Activated naive CD8-positive, alpha-beta T cell treated with anti-CD3 and anti-CD28 coated beads, Interleukin-2, amount 10 ng/mL, durations not matched to agents 7 days and 5 days (primary cell): ENCODE measurements at regions of chr3 and their contacts with region 1.

Region 1: DNA sequence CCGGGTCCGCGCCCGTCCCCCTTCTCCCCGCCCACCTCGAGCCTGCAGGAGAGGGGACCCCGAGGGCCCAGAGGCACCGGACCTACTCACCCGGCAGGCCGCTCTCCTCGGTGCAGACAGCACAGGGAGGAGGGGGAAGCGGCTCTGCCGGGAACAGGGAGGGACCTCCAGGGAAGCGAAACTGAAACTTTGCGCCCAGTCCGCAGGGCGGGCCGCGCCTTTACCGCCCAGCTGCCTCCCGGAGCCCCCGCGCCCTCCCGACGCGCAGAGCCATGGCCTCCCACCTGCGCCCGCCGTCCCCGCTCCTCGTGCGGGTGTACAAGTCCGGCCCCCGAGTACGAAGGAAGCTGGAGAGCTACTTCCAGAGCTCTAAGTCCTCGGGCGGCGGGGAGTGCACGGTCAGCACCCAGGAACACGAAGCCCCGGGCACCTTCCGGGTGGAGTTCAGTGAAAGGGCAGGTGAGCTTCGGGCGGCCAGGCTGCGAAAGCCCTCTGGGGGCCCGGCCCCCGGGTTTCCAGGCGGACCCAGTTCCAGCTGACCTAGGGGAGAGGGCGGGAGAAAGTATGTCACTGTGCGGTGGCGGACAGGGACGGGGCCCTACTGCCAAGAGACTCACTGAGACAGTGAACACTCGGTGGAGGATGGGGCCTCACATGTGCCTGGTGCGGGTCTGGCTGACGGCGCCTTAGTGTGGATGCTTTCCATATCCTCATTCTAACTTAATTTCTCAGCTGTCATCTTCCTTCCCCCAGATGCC is at the starts of genes DTX3L and PARP9:
- DNase-seq: peak; percentile 93
- ATAC-seq: peak; percentile 95
- H3K4me3 Mint-ChIP-seq: peak within 1 kb of the TSS; percentile 97
- H3K27ac Mint-ChIP-seq: peak within 1 kb of the TSS; percentile 100
- H3K4me1 Mint-ChIP-seq: peaks cover 51% of the 10 kb centered on the region
- H3K27me3 Mint-ChIP-seq: no peaks in the 10 kb centered on the region
- total RNA-seq, gene DTX3L: 116 to 117 TPM
- total RNA-seq, gene PARP9: 107 to 114 TPM

Region 2: GRCh38 chr3:122415720-122416654 is 148.3 kb before region 1 on chr3 and contains the start of gene WDR5B:
- POLR2A ChIA-PET with region 1: interaction called, 10 read pairs
- DNase-seq: peak; percentile 97
- ATAC-seq: peak; percentile 93
- H3K4me3 Mint-ChIP-seq: peak within 1 kb of the TSS; percentile 97
- H3K27ac Mint-ChIP-seq: peak within 1 kb of the TSS; percentile 98
- H3K4me1 Mint-ChIP-seq: peaks cover 36% of the 10 kb centered on the region
- H3K27me3 Mint-ChIP-seq: no peaks in the 10 kb centered on the region
- total RNA-seq, gene WDR5B: 6.6 to 7.6 TPM

Region 3: DNA sequence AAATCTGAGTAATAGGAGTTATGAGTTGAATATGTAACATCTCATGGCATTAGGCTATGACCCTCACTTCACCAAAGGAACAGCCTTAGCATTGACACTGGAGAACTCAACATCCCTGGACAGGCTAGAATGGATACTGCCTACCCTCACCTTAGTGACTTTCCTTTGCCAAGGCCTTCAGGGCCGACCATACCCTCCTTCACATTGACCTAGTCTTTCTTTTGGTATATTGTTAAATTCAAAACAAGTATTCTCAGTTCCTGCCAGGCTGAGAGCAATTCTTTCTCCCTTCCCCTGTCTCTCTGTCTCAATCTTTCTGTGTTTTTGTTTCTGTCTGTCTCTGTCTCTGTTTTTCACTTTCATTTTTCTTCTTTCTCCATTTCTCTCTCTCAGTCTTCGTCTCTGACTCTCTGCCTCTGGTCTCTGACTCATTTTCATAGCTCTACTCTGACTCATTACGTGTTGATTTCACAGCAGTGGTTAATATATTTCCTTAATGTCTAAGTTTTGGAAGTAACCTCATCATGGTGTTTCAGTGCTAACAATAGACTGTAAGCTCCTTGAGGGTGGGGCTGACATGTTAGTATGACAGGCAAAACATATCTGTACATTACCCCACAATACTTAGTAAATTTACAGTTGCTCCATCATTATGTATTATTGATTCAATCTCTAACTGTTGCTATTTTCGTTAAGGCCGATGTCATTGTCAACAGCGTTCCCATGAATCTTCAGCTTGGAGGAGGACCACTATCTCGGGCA is 45.6 kb after region 1 on chr3:
- POLR2A ChIA-PET with region 1: interaction called, 14 read pairs
- DNase-seq: no peak
- ATAC-seq: peak; percentile 95
- H3K4me3 Mint-ChIP-seq: peak overlapping the region; percentile 72
- H3K27ac Mint-ChIP-seq: peak overlapping the region; percentile 95
- H3K4me1 Mint-ChIP-seq: peaks cover 19% of the 10 kb centered on the region
- H3K27me3 Mint-ChIP-seq: no peaks in the 10 kb centered on the region